Lower leg skin (tissue), 4 donors: ENCODE measurements at regions of chr4 and their contacts with region 1.

Region 1: DNA sequence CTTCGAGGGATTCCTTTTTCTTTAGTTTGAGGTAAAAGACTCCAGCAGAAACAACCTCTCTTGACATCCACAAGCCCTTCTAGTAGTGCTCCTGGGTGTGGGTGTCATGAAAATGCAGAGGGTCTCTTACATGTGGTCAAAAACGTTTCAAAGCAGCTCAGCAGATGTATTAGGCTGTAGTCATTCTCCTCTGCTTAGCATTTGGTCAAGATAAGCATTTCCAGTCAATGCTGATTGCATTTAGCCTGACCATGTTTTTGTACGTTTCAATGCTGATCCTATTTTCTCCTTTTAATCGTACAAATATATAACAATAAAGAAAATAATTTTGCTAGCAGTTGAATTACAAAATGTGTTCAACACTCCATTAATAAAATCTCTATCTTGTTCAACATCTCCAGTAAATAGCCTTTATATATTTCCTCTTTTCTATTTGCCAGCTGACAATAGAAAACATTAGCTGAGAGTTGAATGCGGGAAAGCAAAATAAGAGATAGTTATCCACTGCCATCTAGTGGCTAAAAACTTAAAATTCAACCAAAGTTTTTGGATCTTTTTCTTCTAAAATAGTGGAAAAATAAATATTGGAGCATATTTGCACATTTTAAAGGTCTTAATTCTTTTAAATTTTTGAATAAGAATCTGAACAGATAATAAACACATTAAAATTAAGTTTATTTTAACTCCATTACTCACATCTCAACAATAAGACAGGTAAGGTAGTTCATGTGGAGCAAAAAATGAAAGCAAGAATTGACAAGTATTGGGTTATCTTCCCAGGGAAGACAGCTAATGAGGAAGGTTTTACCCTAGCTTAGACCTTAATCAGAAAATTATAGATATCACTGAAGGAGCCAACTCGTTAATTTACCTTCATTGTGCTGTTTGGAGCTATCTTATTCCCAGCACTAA is 15.2 kb upstream of the PACRGL start:
- DNase-seq: no peak
- H3K4me3 ChIP-seq: no peak overlapping the region
- CTCF ChIP-seq: no peak
- POLR2A ChIP-seq: no peak

Region 2: GRCh38 chr4:18695733-18696527 is 1989.2 kb before region 1 on chr4:
- intact Hi-C with region 1: loop called (anchors 5 kb)
- DNase-seq: no peak
- H3K4me3 ChIP-seq: no peak overlapping the region
- CTCF ChIP-seq: no peak
- POLR2A ChIP-seq: no peak

Region 3: DNA sequence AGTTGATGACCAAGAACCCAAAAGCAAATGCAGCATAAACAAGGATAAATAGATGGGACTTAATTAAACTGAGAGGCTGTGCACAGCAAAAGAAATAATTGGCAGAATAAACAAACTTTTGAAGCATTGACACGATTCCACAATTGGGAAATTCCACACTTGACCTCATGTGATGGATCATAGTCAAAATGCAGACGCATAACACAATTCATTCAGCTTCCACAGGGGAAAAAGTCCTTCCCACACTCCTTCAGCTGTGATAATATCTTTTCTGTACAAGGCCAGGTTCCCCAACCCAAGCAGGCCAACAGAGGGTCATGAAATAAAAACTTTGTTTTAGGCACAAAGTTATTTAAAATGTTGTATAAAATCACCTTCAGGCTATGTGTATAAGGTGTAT is 500.0 kb before region 1 on chr4:
- intact Hi-C with region 1: no loop called
- DNase-seq: no peak
- H3K4me3 ChIP-seq: no peak overlapping the region
- CTCF ChIP-seq: no peak
- POLR2A ChIP-seq: no peak

Region 4: GRCh38 chr4:20625426-20625825 is 59.7 kb before region 1 on chr4:
- intact Hi-C with region 1: no loop called
- DNase-seq: peak in 1 of 2 donors; percentile 85
- H3K4me3 ChIP-seq: no peak overlapping the region
- CTCF ChIP-seq: no peak
- POLR2A ChIP-seq: no peak